ENCODE measurements at regions of chr13 and their contacts with region 1.

Region 1: DNA sequence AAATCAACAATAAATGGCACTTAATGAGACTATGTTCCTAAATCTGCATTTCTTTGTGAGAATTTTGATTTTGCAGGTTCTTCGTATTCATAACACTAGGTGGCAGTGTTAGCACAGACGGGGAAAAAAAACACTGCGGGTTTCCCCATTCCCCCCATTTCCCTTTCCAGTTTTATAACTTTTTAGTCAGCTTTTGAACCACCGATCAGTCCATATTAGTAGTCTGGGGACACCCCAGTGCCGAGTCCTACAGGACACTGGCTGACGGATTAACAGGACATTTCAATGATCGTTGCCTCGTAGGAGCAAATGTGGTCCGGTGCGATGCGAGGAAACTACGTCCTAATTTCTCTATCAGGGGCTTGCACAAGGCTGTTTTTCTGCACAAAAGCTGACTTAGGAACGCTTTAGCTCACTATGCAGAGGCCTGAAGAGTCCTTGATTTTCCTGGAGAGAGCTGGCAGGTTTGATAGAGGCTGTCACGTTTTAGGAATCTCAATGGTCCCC is 234.3 kb downstream of the LMO7 start:
- DNase-seq: peak; percentile 30
- H3K4me3 Mint-ChIP-seq: peak overlapping the region; percentile 77
- H3K27ac Mint-ChIP-seq: no peak overlapping the region
- H3K4me1 Mint-ChIP-seq: no peaks in the 10 kb centered on the region
- H3K27me3 Mint-ChIP-seq: no peaks in the 10 kb centered on the region
- CTCF ChIP-seq: peak; percentile 62

Region 2: GRCh38 chr13:75675421-75675820 is 195.0 kb before region 1 on chr13:
- CTCF ChIA-PET with region 1: interaction called, 25 read pairs
- POLR2A ChIA-PET with region 1: no interaction called
- intact Hi-C with region 1: no loop called
- DNase-seq: peak; percentile 20
- H3K4me3 Mint-ChIP-seq: peak overlapping the region; percentile 79
- H3K27ac Mint-ChIP-seq: peak overlapping the region; percentile 93
- H3K4me1 Mint-ChIP-seq: peaks cover 8% of the 10 kb centered on the region
- H3K27me3 Mint-ChIP-seq: no peaks in the 10 kb centered on the region
- CTCF ChIP-seq: no peak

Region 3: GRCh38 chr13:75704579-75705320 is 165.7 kb before region 1 on chr13:
- CTCF ChIA-PET with region 1: interaction called, 20 read pairs
- POLR2A ChIA-PET with region 1: no interaction called
- intact Hi-C with region 1: no loop called
- DNase-seq: peak; percentile 69
- H3K4me3 Mint-ChIP-seq: peak overlapping the region; percentile 34
- H3K27ac Mint-ChIP-seq: peak overlapping the region; percentile 98
- H3K4me1 Mint-ChIP-seq: peaks cover 17% of the 10 kb centered on the region
- H3K27me3 Mint-ChIP-seq: no peaks in the 10 kb centered on the region
- CTCF ChIP-seq: peak; percentile 23

Region 4: DNA sequence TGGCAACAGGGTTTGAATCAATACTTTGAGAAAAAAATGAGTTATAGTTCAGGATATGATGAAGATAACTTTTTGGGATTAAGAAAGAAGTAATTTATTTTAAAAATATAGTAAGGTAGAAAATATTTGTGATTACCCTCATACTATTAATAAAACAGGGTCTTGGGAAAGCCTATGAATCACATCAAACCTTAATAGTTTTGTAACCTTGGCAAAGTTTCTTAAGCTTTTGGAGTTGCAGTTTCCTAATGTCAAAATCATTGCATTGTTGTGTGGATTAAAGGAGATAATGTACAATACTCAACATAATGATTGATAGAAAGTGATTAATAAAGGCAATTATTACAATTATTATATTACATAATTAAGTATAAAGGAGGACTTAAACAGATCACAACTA is 85.3 kb before region 1 on chr13:
- CTCF ChIA-PET with region 1: no interaction called
- POLR2A ChIA-PET with region 1: no interaction called
- intact Hi-C with region 1: no loop called
- DNase-seq: peak; percentile 52
- H3K4me3 Mint-ChIP-seq: no peak overlapping the region
- H3K27ac Mint-ChIP-seq: no peak overlapping the region
- H3K4me1 Mint-ChIP-seq: no peaks in the 10 kb centered on the region
- H3K27me3 Mint-ChIP-seq: no peaks in the 10 kb centered on the region
- CTCF ChIP-seq: no peak

Region 5: GRCh38 chr13:76116751-76117360 is 246.4 kb after region 1 on chr13:
- CTCF ChIA-PET with region 1: no interaction called
- POLR2A ChIA-PET with region 1: no interaction called
- intact Hi-C with region 1: no loop called
- DNase-seq: no peak
- H3K4me3 Mint-ChIP-seq: no peak overlapping the region
- H3K27ac Mint-ChIP-seq: no peak overlapping the region
- H3K4me1 Mint-ChIP-seq: no peaks in the 10 kb centered on the region
- H3K27me3 Mint-ChIP-seq: no peaks in the 10 kb centered on the region
- CTCF ChIP-seq: no peak

Region 6: DNA sequence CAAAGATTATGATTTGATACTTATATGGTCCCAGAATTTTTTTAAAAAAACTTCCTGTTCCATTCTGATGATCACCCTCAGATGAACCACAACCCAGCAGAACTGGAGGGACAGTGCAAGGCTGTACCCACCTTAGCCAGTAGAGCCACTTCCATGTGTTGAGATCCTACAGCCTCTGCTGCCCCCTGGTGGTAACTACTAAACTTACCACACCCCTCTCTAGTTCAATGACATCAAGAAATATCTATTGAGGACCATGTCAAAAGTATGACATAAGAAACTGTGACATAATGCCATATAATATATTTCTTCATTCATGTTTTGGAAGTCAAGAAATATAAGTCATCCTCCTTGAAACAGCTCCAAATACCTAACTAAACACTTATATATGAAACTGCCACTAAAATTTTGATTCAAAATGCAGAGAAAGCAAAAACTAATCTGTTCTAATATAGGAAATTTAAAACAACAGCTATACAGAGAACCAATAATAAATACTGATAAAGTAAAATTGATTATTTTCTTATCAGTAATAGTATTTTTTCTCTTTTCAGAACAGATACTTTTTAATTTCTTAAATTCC is 603.2 kb after region 1 on chr13:
- CTCF ChIA-PET with region 1: interaction called, 122 read pairs
- POLR2A ChIA-PET with region 1: interaction called, 4 read pairs
- intact Hi-C with region 1: no loop called
- DNase-seq: peak; percentile 86
- H3K4me3 Mint-ChIP-seq: no peak overlapping the region
- H3K27ac Mint-ChIP-seq: no peak overlapping the region
- H3K4me1 Mint-ChIP-seq: no peaks in the 10 kb centered on the region
- H3K27me3 Mint-ChIP-seq: no peaks in the 10 kb centered on the region
- CTCF ChIP-seq: peak; percentile 87

Region 7: GRCh38 chr13:76903544-76904162 is 1033.2 kb after region 1 on chr13:
- CTCF ChIA-PET with region 1: interaction called, 50 read pairs
- POLR2A ChIA-PET with region 1: no interaction called
- intact Hi-C with region 1: loop called (anchors 1 kb)
- DNase-seq: peak; percentile 79
- H3K4me3 Mint-ChIP-seq: no peak overlapping the region
- H3K27ac Mint-ChIP-seq: no peak overlapping the region
- H3K4me1 Mint-ChIP-seq: peaks cover 9% of the 10 kb centered on the region
- H3K27me3 Mint-ChIP-seq: no peaks in the 10 kb centered on the region
- CTCF ChIP-seq: peak; percentile 98

Region 8: GRCh38 chr13:76980075-76980718 is 1109.7 kb after region 1 on chr13:
- CTCF ChIA-PET with region 1: interaction called, 11 read pairs
- POLR2A ChIA-PET with region 1: no interaction called
- intact Hi-C with region 1: loop called (anchors 1 kb)
- DNase-seq: peak; percentile 70
- H3K4me3 Mint-ChIP-seq: peak overlapping the region; percentile 52
- H3K27ac Mint-ChIP-seq: no peak overlapping the region
- H3K4me1 Mint-ChIP-seq: peaks cover 19% of the 10 kb centered on the region
- H3K27me3 Mint-ChIP-seq: peaks cover 20% of the 10 kb centered on the region
- CTCF ChIP-seq: peak; percentile 94